Calu3 (cell line): ENCODE measurements at regions of chr9 and their contacts with region 1.

Region 1: GRCh38 chr9:26856413-26857032 is 36.1 kb downstream of the CAAP1 start:
- DNase-seq: peak; percentile 36
- H3K4me3 Mint-ChIP-seq: no peak overlapping the region
- H3K27ac Mint-ChIP-seq: no peak overlapping the region
- H3K4me1 Mint-ChIP-seq: no peaks in the 10 kb centered on the region
- H3K27me3 Mint-ChIP-seq: no peaks in the 10 kb centered on the region
- CTCF ChIP-seq: peak; percentile 26

Region 2: DNA sequence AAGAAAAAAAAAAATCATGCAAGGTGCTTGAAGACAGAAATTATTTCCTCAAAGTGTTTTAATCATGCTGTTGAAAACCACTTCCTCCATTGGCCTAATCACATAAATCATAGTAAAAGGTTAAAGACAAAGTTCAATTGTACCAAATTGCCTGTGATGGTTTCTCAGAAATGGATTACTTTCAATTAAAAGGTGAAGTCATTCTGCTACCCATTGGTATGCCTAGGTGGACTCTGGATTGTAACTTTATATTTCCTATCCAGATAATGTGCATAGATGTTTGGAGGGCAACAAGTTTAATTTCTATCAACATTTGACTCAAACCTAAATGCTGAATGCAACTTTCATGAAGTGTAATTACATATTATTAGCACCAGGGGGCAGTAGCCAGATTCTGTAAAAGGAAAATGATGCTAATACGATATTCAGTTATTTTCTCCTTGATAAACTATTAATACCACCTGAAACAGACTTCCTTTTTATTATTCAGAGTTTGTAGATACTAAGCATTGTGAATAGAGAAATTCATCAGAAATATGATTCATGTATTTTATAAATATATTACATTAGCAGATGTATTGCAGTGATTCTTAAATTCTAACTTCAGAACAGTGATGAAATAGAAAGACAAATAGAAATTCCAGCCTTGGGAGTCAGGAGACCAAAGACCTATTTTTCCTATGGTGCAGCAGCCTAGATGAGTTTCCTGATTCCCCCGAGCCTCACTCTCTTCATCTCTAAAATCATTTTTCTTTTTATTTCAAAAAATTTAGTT is 112.1 kb before region 1 on chr9:
- CTCF ChIA-PET with region 1: interaction called, 6 read pairs
- intact Hi-C with region 1: loop called (anchors 1 kb)
- DNase-seq: peak; percentile 2
- H3K4me3 Mint-ChIP-seq: no peak overlapping the region
- H3K27ac Mint-ChIP-seq: no peak overlapping the region
- H3K4me1 Mint-ChIP-seq: peaks cover 9% of the 10 kb centered on the region
- H3K27me3 Mint-ChIP-seq: no peaks in the 10 kb centered on the region
- CTCF ChIP-seq: peak; percentile 20